Ovary (tissue), 10 donors: ENCODE measurements at regions of chr3 and their contacts with region 1.

Region 1: GRCh38 chr3:86481031-86481430 is 509.9 kb downstream of the VGLL3 start:
- DNase-seq: no peak
- H3K4me3 ChIP-seq: no peak overlapping the region
- H3K27ac ChIP-seq: no peak overlapping the region
- H3K4me1 ChIP-seq: no peaks in the 10 kb centered on the region
- H3K27me3 ChIP-seq: no peaks in the 10 kb centered on the region
- CTCF ChIP-seq: no peak
- EP300 ChIP-seq: no peak
- POLR2A ChIP-seq: no peak

Region 2: DNA sequence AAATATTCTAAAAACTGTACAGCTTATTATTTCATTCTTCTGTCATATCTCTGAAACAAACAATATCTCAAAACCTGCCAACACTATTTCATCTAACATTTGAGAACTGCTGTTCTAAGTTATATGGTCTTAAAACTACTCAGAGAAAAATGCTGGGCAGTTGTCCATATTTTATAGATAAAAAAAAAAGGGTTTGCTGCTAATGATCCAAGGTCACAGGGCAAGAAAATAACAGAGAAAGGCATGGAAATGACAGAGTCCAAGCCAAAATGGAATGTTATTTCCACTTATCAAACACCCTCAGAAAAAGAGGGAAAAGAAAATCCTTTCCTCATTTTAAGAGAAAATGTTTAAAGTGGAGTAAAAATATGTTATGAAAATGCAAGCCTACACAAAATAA is 1209.1 kb before region 1 on chr3:
- intact Hi-C with region 1: no loop called
- DNase-seq: no peak
- H3K4me3 ChIP-seq: no peak overlapping the region
- H3K27ac ChIP-seq: no peak overlapping the region
- H3K4me1 ChIP-seq: no peaks in the 10 kb centered on the region
- H3K27me3 ChIP-seq: no peaks in the 10 kb centered on the region
- CTCF ChIP-seq: no peak
- EP300 ChIP-seq: no peak
- POLR2A ChIP-seq: no peak

Region 3: DNA sequence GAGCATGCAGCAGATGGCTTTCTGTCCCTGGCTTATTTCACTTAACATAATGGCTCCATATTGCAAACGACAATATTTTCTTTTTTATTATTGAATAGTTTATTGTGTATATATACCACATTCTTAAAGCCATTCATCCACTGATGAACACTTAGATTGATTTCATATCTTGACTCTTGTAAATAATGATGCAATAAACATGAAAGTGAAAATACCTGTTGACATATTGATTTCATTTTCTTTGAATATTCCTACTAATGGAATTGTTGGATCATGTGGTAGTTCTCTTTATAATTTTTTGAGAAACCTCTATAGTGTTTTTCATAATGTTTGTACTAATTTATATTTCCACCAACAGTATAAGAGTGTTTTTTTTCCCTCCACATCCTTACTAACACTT is 171.7 kb before region 1 on chr3:
- intact Hi-C with region 1: no loop called
- DNase-seq: no peak
- H3K4me3 ChIP-seq: no peak overlapping the region
- H3K27ac ChIP-seq: no peak overlapping the region
- H3K4me1 ChIP-seq: no peaks in the 10 kb centered on the region
- H3K27me3 ChIP-seq: no peaks in the 10 kb centered on the region
- CTCF ChIP-seq: no peak
- EP300 ChIP-seq: no peak
- POLR2A ChIP-seq: no peak

Region 4: DNA sequence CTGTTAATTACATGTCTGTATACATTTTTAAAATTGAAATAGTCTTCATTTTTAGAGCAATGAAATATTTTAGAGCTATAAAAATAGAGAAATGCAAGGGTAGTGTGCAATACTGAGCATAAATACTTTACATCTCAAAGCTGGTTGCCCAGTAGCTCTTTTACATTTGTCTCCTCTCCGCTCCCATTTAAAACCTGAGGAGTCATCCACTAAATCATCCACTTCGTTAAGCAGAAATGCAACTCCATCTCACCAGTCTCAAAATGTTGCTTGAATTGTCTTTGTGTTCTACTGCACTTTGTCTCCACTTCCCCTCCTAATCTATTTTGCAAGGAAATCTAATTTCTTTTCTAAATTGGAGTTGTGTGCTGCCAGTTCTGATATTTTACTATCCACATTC is 53.7 kb before region 1 on chr3:
- intact Hi-C with region 1: loop called in 1 of 4 experiments (anchors 5 kb)
- DNase-seq: no peak
- H3K4me3 ChIP-seq: no peak overlapping the region
- H3K27ac ChIP-seq: no peak overlapping the region
- H3K4me1 ChIP-seq: no peaks in the 10 kb centered on the region
- H3K27me3 ChIP-seq: no peaks in the 10 kb centered on the region
- CTCF ChIP-seq: no peak
- EP300 ChIP-seq: no peak
- POLR2A ChIP-seq: no peak

Region 5: DNA sequence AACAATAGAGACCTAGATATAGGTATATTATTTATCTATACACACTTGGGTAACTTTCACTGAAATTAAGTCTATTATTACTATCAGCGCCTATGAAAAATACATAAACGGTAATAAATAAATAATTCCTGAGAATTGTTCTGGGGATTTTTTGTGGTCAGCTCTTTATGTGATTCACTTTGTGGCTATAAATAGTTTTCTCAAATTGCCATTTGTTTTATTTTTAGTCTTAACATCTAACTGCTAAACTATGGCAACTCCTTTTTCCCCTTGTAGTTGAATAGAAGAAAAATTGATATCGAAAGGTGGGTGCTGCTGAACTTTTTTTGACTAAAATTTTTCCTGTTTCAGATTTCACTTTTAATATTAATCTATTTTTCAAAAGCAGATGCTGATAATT is 320.9 kb after region 1 on chr3:
- intact Hi-C with region 1: no loop called
- DNase-seq: no peak
- H3K4me3 ChIP-seq: no peak overlapping the region
- H3K27ac ChIP-seq: no peak overlapping the region
- H3K4me1 ChIP-seq: no peaks in the 10 kb centered on the region
- H3K27me3 ChIP-seq: no peaks in the 10 kb centered on the region
- CTCF ChIP-seq: no peak
- EP300 ChIP-seq: no peak
- POLR2A ChIP-seq: no peak